K562 (cell line): ENCODE measurements at regions of chr11 and their contacts with region 1.

Region 1: GRCh38 chr11:75422253-75423231 is 10.5 kb downstream of the KLHL35 start:
- DNase-seq: peak; percentile 62 to 76 (median 69)
- ATAC-seq: peak; percentile 63
- H3K4me3 ChIP-seq: no peak overlapping the region
- H3K27ac ChIP-seq: no peak overlapping the region
- H3K4me1 ChIP-seq: peaks cover 28 to 36% of the 10 kb centered on the region in 2 experiments; a peak in 4 of 5 replicates
- H3K27me3 ChIP-seq: no peaks in the 10 kb centered on the region
- CTCF ChIP-seq: no peak
- EP300 ChIP-seq: peak; percentile 60; the same call in 1 of the 2 replicates
- POLR2A ChIP-seq: no peak
- RAD21 ChIP-seq: no peak

Region 2: GRCh38 chr11:75406338-75406777 is 16.2 kb before region 1 on chr11:
- CTCF ChIA-PET with region 1: no interaction called
- POLR2A ChIA-PET with region 1: interaction called, 52 read pairs
- in situ Hi-C with region 1: no loop called
- intact Hi-C with region 1: no loop called
- DNase-seq: peak; percentile 60 to 78 (median 71)
- ATAC-seq: peak; percentile 58
- H3K4me3 ChIP-seq: no peak overlapping the region
- H3K27ac ChIP-seq: peak overlapping the region; percentile 2; the same call in 2 of the 3 replicates
- H3K4me1 ChIP-seq: peaks cover 17 to 43% of the 10 kb centered on the region in 2 experiments; a peak in 3 of 5 replicates
- H3K27me3 ChIP-seq: no peaks in the 10 kb centered on the region
- CTCF ChIP-seq: no peak
- EP300 ChIP-seq: peak; percentile 91
- POLR2A ChIP-seq: peak; percentile 55
- RAD21 ChIP-seq: no peak

Region 3: GRCh38 chr11:75433447-75433846 is 10.9 kb after region 1 on chr11:
- CTCF ChIA-PET with region 1: no interaction called
- POLR2A ChIA-PET with region 1: interaction called, 16 read pairs
- in situ Hi-C with region 1: no loop called
- intact Hi-C with region 1: no loop called
- DNase-seq: no peak
- ATAC-seq: no peak; the same call in 2 of the 3 replicates
- H3K4me3 ChIP-seq: no peak overlapping the region
- H3K27ac ChIP-seq: no peak overlapping the region
- H3K4me1 ChIP-seq: peaks cover 0 to 6% of the 10 kb centered on the region in 2 experiments; a peak in 3 of 5 replicates
- H3K27me3 ChIP-seq: peaks cover 4 to 22% of the 10 kb centered on the region in 2 experiments; a peak in 4 of 5 replicates
- CTCF ChIP-seq: no peak
- EP300 ChIP-seq: no peak
- POLR2A ChIP-seq: no peak
- RAD21 ChIP-seq: no peak

Region 4: DNA sequence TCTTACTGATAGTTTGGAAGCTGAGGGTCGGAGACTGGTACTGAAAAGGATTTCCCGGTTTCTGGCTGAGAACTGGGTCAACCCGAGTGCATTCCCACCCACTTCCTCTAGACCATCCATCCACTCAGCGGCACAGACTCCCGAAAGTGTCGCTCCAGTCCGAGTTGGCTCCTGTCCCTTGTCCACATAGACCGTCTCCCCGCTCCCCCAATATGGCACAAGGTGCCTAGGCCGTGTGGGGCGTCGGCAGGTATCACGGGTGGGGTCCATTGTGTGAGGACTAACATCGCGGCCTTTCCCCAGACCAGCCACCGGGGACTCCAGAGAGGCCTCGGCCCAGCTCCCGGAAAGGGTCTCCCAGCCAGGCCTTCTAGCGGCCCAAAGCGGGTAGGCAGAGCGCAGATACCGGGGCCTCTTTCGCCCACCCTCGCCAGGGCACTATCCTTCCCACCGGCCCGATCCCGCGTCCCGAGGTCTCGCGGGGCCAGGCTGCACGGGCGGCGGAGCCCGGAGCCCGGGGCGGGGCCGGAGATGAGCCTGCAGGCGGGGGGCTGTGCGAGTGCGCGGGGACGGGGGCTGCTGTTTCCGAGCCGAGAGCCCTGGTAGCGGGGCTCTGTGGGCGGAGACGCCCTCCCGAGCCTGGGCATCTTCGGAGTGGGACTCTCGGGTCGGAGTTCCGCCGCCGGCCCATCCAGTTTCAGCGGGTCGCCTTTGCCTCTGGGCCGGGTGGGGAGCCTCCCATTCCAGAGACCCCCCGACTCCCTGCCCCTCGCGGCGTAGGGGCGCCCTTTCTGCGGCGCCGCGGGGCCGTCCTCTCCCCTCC is 160.6 kb after region 1 on chr11:
- CTCF ChIA-PET with region 1: no interaction called
- POLR2A ChIA-PET with region 1: no interaction called
- in situ Hi-C with region 1: no loop called
- intact Hi-C with region 1: no loop called
- DNase-seq: peak; percentile 55 to 78 (median 74)
- ATAC-seq: peak; percentile 90
- H3K4me3 ChIP-seq: peak overlapping the region; percentile 45
- H3K27ac ChIP-seq: peak overlapping the region; percentile 55
- H3K4me1 ChIP-seq: peaks cover 20 to 33% of the 10 kb centered on the region in 2 experiments; a peak in 4 of 5 replicates
- H3K27me3 ChIP-seq: no peaks in the 10 kb centered on the region
- CTCF ChIP-seq: peak; percentile 20 to 28 (median 24); a peak in 3 of 6 replicates
- EP300 ChIP-seq: no peak
- POLR2A ChIP-seq: peak; percentile 58
- RAD21 ChIP-seq: no peak